ENCODE measurements at regions of chr10 and their contacts with region 1.

Region 1: GRCh38 chr10:62098278-62099121 is 170.1 kb downstream of the RTKN2 start:
- DNase-seq: no peak
- H3K4me3 Mint-ChIP-seq: no peak overlapping the region
- H3K27ac Mint-ChIP-seq: peak overlapping the region; percentile 17
- H3K4me1 Mint-ChIP-seq: peaks cover 25% of the 10 kb centered on the region
- H3K27me3 Mint-ChIP-seq: no peaks in the 10 kb centered on the region

Region 2: GRCh38 chr10:62109587-62110293 is 11.2 kb after region 1 on chr10:
- intact Hi-C with region 1: loop called (anchors 1 kb)
- DNase-seq: no peak
- H3K4me3 Mint-ChIP-seq: peak overlapping the region; percentile 6
- H3K27ac Mint-ChIP-seq: peak overlapping the region; percentile 3
- H3K4me1 Mint-ChIP-seq: peaks cover 35% of the 10 kb centered on the region
- H3K27me3 Mint-ChIP-seq: no peaks in the 10 kb centered on the region